AG04450 (cell line): ENCODE measurements at regions of chr1 and their contacts with region 1.

Region 1: DNA sequence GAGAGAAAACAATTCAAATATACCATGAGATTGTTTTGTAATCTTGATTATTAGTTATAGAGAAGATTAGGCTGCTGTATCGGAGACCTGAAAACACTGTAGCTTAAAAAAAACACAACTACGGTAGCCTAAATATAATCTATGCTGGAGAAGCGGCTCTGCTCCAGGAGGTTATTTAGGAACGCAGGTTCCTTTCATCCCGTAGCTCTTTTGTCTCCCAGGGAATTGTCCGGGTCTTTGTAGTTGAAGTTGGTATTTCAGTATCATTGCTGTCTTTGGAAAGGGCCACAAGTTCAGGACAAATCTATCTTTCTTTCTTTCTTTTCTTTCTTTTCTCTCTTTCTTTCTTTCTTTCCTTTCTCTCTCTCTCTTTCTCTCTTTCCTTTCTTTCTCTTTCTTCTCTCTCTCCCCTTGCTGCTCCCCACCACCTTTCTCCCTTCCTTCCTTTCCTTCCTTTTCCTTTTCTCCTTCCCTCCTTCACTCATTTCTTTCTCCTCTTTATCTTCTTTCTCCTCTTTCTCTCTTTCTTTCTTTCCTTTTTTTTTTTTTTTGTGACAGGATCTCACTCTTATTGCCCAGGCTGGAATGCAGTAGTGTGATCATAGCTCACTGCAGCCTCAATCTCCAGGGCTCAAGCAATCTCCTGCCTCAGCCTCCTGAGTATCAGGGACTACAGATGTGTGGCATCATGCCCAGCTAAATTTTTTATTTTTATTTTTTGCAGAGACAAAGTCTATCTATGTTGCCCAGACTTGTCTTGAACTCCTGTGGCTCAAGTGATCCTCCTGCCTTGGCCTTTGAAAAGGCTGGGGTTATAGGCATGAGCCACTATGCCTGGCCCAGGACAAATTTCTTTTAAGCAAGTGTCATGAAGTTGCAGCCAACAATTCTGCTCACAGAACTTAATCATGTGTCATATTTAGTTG is 10.9 kb upstream of the NFIA start:
- DNase-seq: no peak
- H3K4me3 ChIP-seq: no peak overlapping the region
- H3K27ac ChIP-seq: no peak overlapping the region
- H3K27me3 ChIP-seq: peaks cover 2% of the 10 kb centered on the region
- CTCF ChIP-seq: no peak

Region 2: DNA sequence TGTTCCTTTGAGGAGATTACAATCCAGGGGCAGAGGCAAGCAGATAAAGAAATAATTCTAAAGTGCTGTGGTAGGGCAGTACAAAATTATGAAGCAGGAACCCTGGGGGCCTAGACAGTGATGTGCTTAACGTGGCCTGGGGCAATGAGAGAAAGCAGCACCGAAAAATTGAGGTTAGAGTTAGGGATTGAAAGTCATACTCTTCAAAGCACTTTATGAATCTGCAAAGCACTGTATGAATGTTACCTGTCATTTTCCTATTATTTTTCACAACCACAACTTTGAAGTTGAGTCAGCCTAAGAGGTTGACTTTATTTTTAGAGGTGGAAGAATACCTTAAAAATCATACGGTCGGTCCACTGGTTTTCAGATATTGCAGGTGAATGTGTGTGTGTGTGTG is 172.5 kb before region 1 on chr1:
- CTCF ChIA-PET with region 1: no interaction called
- POLR2A ChIA-PET with region 1: no interaction called
- DNase-seq: no peak
- H3K4me3 ChIP-seq: no peak overlapping the region
- H3K27ac ChIP-seq: no peak overlapping the region
- H3K27me3 ChIP-seq: no peaks in the 10 kb centered on the region
- CTCF ChIP-seq: no peak

Region 3: GRCh38 chr1:60942896-60943638 is 128.4 kb before region 1 on chr1:
- CTCF ChIA-PET with region 1: no interaction called
- POLR2A ChIA-PET with region 1: no interaction called
- DNase-seq: no peak
- H3K4me3 ChIP-seq: no peak overlapping the region
- H3K27ac ChIP-seq: no peak overlapping the region
- H3K27me3 ChIP-seq: no peaks in the 10 kb centered on the region
- CTCF ChIP-seq: no peak

Region 4: DNA sequence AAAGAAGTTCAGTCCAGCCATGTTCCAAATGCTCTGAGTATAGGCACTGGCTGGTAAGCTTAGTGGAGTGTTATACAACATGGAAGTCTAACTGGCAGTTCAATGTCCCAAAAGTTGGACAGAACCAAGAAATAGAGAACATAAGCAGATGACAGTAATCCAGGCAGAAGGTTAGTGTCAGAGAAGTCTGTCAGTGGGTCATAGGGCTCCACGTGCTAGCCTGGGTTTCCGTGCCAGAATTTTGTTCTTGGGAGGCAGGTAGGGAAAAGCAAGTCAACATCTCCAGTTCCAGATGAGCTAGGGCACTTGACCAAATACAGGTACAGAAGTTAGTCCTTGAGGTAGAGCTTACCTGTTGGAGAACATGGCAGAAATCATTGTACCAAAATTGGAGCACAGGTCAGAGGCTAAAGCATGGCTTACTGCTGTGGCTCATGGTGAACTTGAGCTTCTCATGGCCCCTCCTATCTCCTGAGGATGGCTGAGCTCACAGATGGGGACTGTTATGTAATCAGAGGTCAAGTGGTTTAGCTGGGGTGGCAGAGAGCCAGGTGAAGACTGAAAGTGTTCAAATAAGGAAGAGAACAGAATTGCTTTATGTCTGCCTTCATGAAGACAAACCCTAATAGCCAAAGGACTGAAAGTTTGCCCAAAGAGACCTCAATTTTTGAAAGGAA is 181.7 kb after region 1 on chr1:
- CTCF ChIA-PET with region 1: interaction called, 10 read pairs
- POLR2A ChIA-PET with region 1: no interaction called
- DNase-seq: no peak
- H3K4me3 ChIP-seq: no peak overlapping the region
- H3K27ac ChIP-seq: no peak overlapping the region
- H3K27me3 ChIP-seq: no peaks in the 10 kb centered on the region
- CTCF ChIP-seq: no peak

Region 5: GRCh38 chr1:61344696-61345095 is 273.2 kb after region 1 on chr1:
- CTCF ChIA-PET with region 1: no interaction called
- POLR2A ChIA-PET with region 1: no interaction called
- DNase-seq: no peak
- H3K4me3 ChIP-seq: no peak overlapping the region
- H3K27ac ChIP-seq: no peak overlapping the region
- H3K27me3 ChIP-seq: peaks cover 9% of the 10 kb centered on the region
- CTCF ChIP-seq: no peak